ENCODE measurements at regions of chr4 and their contacts with region 1.

Region 1: DNA sequence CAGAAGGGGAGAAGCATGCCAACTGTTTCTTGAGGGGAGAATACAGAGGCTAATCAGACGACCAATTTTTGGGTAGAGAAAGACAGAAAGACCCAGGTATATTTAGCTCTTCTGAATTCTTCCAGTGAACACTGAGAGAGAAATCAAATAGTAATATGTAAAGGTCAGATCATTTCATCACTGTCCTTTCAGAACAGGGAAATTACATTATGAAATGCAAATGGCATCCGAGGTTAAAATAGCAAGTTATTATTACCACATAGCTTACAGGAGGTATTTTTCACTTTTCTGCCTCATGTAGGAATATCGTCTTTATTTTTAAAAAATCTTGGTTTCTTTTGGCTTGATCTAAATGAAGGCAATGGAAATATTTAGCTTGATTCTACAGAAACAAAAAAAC is 18.0 kb downstream of the GABRB1 start:
- DNase-seq: no peak
- ATAC-seq: no peak
- H3K4me3 ChIP-seq: no peak overlapping the region
- H3K27ac ChIP-seq: no peak overlapping the region
- H3K4me1 ChIP-seq: no peaks in the 10 kb centered on the region
- H3K27me3 ChIP-seq: no peaks in the 10 kb centered on the region
- CTCF ChIP-seq: no peak
- POLR2A ChIP-seq: no peak
- RAD21 ChIP-seq: no peak

Region 2: DNA sequence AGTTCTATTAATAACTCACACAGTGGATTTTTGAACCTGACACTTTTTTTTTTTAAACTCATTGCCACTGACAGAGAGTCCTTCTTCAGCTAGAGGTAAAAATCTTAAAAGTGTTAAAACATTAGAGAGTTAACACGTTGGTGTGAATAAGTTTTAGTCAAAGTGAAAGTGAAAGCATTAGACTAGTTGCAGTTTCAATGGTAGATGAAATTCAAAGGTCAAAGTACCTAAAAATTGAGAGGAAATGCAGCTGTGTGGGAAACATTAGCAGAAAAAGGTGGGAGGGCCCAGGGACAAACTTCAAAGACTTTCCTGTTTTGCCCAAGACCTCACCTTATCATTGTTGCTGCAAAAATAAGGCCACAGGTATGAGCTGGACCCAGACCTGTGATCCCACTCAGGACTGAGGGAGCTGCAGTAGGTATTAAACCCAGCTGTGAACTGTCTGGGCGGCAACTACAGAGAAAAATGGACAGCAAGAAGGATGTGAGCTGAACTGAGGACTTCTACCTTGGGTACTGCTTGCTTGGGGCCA is 38.4 kb before region 1 on chr4:
- CTCF ChIA-PET with region 1: no interaction called
- POLR2A ChIA-PET with region 1: no interaction called
- dilution Hi-C with region 1: no loop called
- in situ Hi-C with region 1: no loop called
- intact Hi-C with region 1: no loop called
- DNase-seq: no peak
- ATAC-seq: no peak; the same call in 1 of the 2 replicates
- H3K4me3 ChIP-seq: no peak overlapping the region
- H3K27ac ChIP-seq: no peak overlapping the region
- H3K4me1 ChIP-seq: no peaks in the 10 kb centered on the region; the same call in 1 of the 2 replicates
- H3K27me3 ChIP-seq: no peaks in the 10 kb centered on the region
- CTCF ChIP-seq: no peak
- POLR2A ChIP-seq: no peak
- RAD21 ChIP-seq: no peak

Region 3: GRCh38 chr4:47095884-47096283 is 46.5 kb after region 1 on chr4:
- CTCF ChIA-PET with region 1: no interaction called
- POLR2A ChIA-PET with region 1: no interaction called
- dilution Hi-C with region 1: no loop called
- in situ Hi-C with region 1: no loop called
- intact Hi-C with region 1: loop called (anchors 10 kb)
- DNase-seq: no peak
- ATAC-seq: no peak
- H3K4me3 ChIP-seq: no peak overlapping the region
- H3K27ac ChIP-seq: no peak overlapping the region
- H3K4me1 ChIP-seq: no peaks in the 10 kb centered on the region
- H3K27me3 ChIP-seq: no peaks in the 10 kb centered on the region
- CTCF ChIP-seq: no peak
- POLR2A ChIP-seq: no peak
- RAD21 ChIP-seq: no peak